CD8-positive, alpha-beta T cell (primary cell): ENCODE measurements at regions of chr6 and their contacts with region 1.

Region 1: GRCh38 chr6:29705389-29706231 is 17.6 kb upstream of the HLA-F start:
- DNase-seq: peak in 2 of 9 experiments; percentile 57 to 73
- ATAC-seq: no peak
- H3K4me3 ChIP-seq: no peak overlapping the region
- H3K4me3 Mint-ChIP-seq: peak overlapping the region; percentile 26
- H3K27ac ChIP-seq: no peak overlapping the region
- H3K27ac Mint-ChIP-seq: peak overlapping the region; percentile 77
- H3K4me1 ChIP-seq: peaks cover 53% of the 10 kb centered on the region
- H3K4me1 Mint-ChIP-seq: peaks cover 55% of the 10 kb centered on the region
- H3K27me3 ChIP-seq: no peaks in the 10 kb centered on the region
- H3K27me3 Mint-ChIP-seq: peaks cover 19% of the 10 kb centered on the region
- CTCF ChIP-seq: peak; percentile 79

Region 2: GRCh38 chr6:29649701-29650673 is 55.6 kb before region 1 on chr6:
- CTCF ChIA-PET with region 1: interaction called, 7 read pairs
- POLR2A ChIA-PET with region 1: no interaction called
- intact Hi-C with region 1: loop called in 1 of 2 experiments (anchors 5 kb)
- DNase-seq: peak; percentile 93 to 99 (median 99)
- ATAC-seq: peak; percentile 94
- H3K4me3 ChIP-seq: peak overlapping the region; percentile 67 to 68
- H3K4me3 Mint-ChIP-seq: peak overlapping the region; percentile 97
- H3K27ac ChIP-seq: peak overlapping the region; percentile 93 to 95
- H3K27ac Mint-ChIP-seq: peak overlapping the region; percentile 100
- H3K4me1 ChIP-seq: peaks cover 12% of the 10 kb centered on the region
- H3K4me1 Mint-ChIP-seq: peaks cover 13% of the 10 kb centered on the region
- H3K27me3 ChIP-seq: no peaks in the 10 kb centered on the region
- H3K27me3 Mint-ChIP-seq: peaks cover under 1% of the 10 kb centered on the region
- CTCF ChIP-seq: peak; percentile 98

Region 3: DNA sequence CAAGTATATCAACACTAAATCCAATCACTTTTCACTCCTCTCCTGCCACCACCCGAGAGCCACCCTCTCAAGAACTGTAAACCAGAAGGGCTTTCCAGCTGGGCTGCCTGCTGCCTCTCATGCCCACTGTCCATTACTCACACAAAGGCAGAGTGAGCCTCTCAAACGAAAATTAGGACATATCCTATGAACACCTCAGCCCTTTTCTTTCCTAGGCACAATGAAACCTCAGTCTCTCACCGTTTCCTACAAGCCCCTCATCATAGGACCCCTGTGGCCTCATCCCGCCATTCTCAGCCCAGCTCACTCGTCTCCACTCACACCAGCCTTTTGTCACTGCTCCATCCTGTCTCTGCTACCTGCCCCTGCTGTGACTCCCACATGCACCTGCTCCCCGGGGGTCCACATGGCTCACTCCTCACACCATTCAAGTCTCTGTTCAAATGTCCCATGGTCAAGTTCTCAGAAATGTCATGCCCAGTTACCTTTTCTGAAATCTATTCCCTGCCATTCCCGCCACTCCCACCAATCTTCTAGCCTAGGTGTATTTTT is 25.0 kb after region 1 on chr6:
- CTCF ChIA-PET with region 1: interaction called, 25 read pairs
- POLR2A ChIA-PET with region 1: interaction called, 15 read pairs
- intact Hi-C with region 1: no loop called
- DNase-seq: peak in 2 of 9 experiments; percentile 10 to 44
- ATAC-seq: no peak
- H3K4me3 ChIP-seq: no peak overlapping the region
- H3K4me3 Mint-ChIP-seq: no peak overlapping the region
- H3K27ac ChIP-seq: peak overlapping the region in 1 of 2 experiments; percentile 14
- H3K27ac Mint-ChIP-seq: peak overlapping the region; percentile 89
- H3K4me1 ChIP-seq: peaks cover 46% of the 10 kb centered on the region
- H3K4me1 Mint-ChIP-seq: peaks cover 76% of the 10 kb centered on the region
- H3K27me3 ChIP-seq: no peaks in the 10 kb centered on the region
- H3K27me3 Mint-ChIP-seq: no peaks in the 10 kb centered on the region
- CTCF ChIP-seq: no peak

Region 4: GRCh38 chr6:29752451-29753308 is 47.1 kb after region 1 on chr6:
- CTCF ChIA-PET with region 1: interaction called, 55 read pairs
- POLR2A ChIA-PET with region 1: interaction called, 20 read pairs
- intact Hi-C with region 1: loop called (anchors 1 kb)
- DNase-seq: peak; percentile 69 to 93 (median 85)
- ATAC-seq: peak; percentile 67
- H3K4me3 ChIP-seq: peak overlapping the region; percentile 74 to 96
- H3K4me3 Mint-ChIP-seq: peak overlapping the region; percentile 96
- H3K27ac ChIP-seq: peak overlapping the region; percentile 67 to 75
- H3K27ac Mint-ChIP-seq: peak overlapping the region; percentile 92
- H3K4me1 ChIP-seq: peaks cover 21% of the 10 kb centered on the region
- H3K4me1 Mint-ChIP-seq: peaks cover 40% of the 10 kb centered on the region
- H3K27me3 ChIP-seq: no peaks in the 10 kb centered on the region
- H3K27me3 Mint-ChIP-seq: no peaks in the 10 kb centered on the region
- CTCF ChIP-seq: peak; percentile 98

Region 5: GRCh38 chr6:29827579-29828470 is 122.2 kb after region 1 on chr6 and contains the start of gene HLA-G:
- CTCF ChIA-PET with region 1: interaction called, 11 read pairs
- POLR2A ChIA-PET with region 1: no interaction called
- intact Hi-C with region 1: no loop called
- DNase-seq: peak in 2 of 9 experiments; percentile 22
- ATAC-seq: no peak
- H3K4me3 ChIP-seq: peak within 1 kb of the TSS; percentile 22 to 41
- H3K4me3 Mint-ChIP-seq: peak within 1 kb of the TSS; percentile 74
- H3K27ac ChIP-seq: no peak within 1 kb of the TSS
- H3K27ac Mint-ChIP-seq: no peak within 1 kb of the TSS
- H3K4me1 ChIP-seq: peaks cover 7% of the 10 kb centered on the region
- H3K4me1 Mint-ChIP-seq: peaks cover 11% of the 10 kb centered on the region
- H3K27me3 ChIP-seq: peaks cover 10 to 12% of the 10 kb centered on the region in 2 experiments
- H3K27me3 Mint-ChIP-seq: peaks cover 63% of the 10 kb centered on the region
- CTCF ChIP-seq: no peak
- total RNA-seq, gene HLA-G: 6.9 to 7.2 TPM

Region 6: GRCh38 chr6:29926413-29927274 is 221.0 kb after region 1 on chr6:
- CTCF ChIA-PET with region 1: no interaction called
- POLR2A ChIA-PET with region 1: no interaction called
- intact Hi-C with region 1: loop called in 1 of 2 experiments (anchors 1 kb)
- DNase-seq: peak; percentile 65 to 93 (median 83)
- ATAC-seq: peak; percentile 93
- H3K4me3 ChIP-seq: peak overlapping the region; percentile 88 to 93
- H3K4me3 Mint-ChIP-seq: peak overlapping the region; percentile 83
- H3K27ac ChIP-seq: peak overlapping the region; percentile 92 to 99
- H3K27ac Mint-ChIP-seq: peak overlapping the region; percentile 94
- H3K4me1 ChIP-seq: peaks cover 8% of the 10 kb centered on the region
- H3K4me1 Mint-ChIP-seq: peaks cover 32% of the 10 kb centered on the region
- H3K27me3 ChIP-seq: no peaks in the 10 kb centered on the region
- H3K27me3 Mint-ChIP-seq: no peaks in the 10 kb centered on the region
- CTCF ChIP-seq: no peak

Region 7: GRCh38 chr6:30013291-30013922 is 307.8 kb after region 1 on chr6:
- CTCF ChIA-PET with region 1: interaction called, 4 read pairs
- POLR2A ChIA-PET with region 1: no interaction called
- intact Hi-C with region 1: loop called (anchors 1 to 5 kb)
- DNase-seq: peak in 7 of 9 experiments; percentile 17 to 58 (median 52)
- ATAC-seq: no peak
- H3K4me3 ChIP-seq: no peak overlapping the region
- H3K4me3 Mint-ChIP-seq: no peak overlapping the region
- H3K27ac ChIP-seq: no peak overlapping the region
- H3K27ac Mint-ChIP-seq: no peak overlapping the region
- H3K4me1 ChIP-seq: no peaks in the 10 kb centered on the region
- H3K4me1 Mint-ChIP-seq: no peaks in the 10 kb centered on the region
- H3K27me3 ChIP-seq: peaks cover 0 to 2% of the 10 kb centered on the region in 2 experiments
- H3K27me3 Mint-ChIP-seq: no peaks in the 10 kb centered on the region
- CTCF ChIP-seq: no peak